Kidney (tissue), 22 donors: ENCODE measurements at regions of chr1 and their contacts with region 1.

Region 1: DNA sequence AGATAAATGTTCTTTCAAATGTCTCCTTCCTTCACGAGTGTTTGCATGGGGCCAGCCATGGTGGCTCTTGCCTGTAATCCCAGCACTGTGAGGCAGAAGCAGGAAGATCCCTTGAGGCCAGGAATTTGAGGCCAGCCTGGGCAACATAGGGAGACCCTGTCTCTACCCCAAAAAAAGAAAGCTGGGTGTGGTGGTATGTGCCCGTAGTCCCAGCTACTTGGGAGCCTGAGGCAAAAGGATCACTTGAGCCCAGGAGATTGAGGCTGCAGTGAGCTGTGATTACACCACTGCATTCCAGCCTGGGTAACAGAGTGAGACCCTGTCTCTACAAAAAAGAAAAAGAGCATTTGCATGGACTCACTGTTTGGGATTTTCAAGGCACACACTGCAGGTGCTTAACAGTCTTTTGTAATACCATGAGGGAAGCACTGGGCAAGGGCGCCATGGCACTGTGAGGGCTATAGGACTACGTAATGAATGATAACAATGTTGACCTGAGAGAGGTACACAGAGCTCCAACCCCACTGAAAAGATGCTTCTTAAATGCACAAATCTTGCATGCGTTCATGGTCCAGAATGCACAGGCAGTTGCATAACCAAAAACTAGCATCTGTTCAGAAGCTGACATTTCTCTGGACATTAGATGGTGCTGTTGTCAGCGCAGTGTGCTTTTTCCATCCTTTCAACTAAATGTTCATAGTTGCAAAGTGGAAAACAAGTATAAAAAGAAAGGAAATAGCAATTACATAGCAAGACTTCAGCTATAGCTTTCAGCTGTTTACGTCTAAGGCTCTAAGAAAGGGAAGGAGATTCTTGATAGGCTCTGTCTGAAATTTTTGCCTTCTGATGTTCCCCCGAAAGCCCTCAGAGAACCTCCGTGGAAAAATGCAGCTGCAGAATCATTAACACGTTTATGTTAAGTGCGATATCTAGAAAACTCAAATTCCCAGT is 7.8 kb upstream of the TARBP1 start:
- DNase-seq: peak in 3 of 5 donors; percentile 37 to 88 (median 69)
- H3K4me3 ChIP-seq: peak overlapping the region in 1 of 3 donors; percentile 26
- H3K27ac ChIP-seq: no peak overlapping the region
- H3K4me1 ChIP-seq: peaks cover 0 to 2% (median 0%) of the 10 kb centered on the region in 3 donors
- H3K27me3 ChIP-seq: no peaks in the 10 kb centered on the region
- CTCF ChIP-seq: peak; percentile 73

Region 2: GRCh38 chr1:234231061-234231892 is 255.5 kb before region 1 on chr1:
- intact Hi-C with region 1: no loop called
- DNase-seq: no peak
- H3K4me3 ChIP-seq: no peak overlapping the region
- H3K27ac ChIP-seq: no peak overlapping the region
- H3K4me1 ChIP-seq: no peaks in the 10 kb centered on the region
- H3K27me3 ChIP-seq: no peaks in the 10 kb centered on the region
- CTCF ChIP-seq: no peak

Region 3: DNA sequence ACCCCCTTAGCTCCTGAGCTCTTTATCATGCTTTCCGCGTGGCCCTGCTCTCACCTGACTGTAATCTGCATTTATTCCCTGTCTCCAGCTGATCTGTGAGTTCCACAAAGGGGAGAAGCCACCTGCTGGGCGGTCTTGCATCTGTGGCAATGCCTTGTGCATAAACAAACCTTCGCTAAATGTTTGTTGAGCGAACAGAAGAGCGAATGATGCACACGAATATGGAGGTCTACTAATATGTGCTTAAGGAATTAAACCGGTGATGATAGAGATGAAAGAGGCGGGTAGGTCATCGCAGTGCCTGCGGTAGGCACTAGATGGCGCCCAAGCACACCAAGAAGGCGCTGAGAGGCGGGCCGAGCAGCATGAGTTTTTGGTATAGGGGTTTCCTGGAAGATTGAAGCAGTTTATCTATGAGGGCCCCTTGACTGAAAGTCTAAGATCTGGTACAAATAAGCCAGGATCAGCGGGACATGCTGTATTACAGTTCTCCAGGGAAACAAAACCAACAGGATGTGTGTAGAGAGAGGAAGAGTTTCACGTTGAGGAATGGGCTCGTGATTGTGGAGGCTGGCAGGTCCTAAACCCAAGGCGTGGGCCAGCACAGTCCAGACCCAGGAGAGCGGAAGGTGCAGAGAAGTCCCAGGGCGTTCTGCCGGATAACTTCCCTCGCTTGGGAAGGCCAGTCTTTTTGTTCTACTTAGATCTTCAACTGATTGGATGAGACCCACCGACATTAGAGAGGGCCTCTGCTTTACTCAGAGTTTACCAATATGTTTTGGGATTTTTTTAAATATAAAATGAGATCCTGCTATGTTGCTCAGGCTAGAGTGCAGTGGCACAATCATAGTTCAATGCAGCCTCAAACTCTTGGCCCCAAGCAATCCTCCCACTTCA is 607.2 kb after region 1 on chr1:
- intact Hi-C with region 1: loop called (anchors 5 kb)
- DNase-seq: peak; percentile 80 to 91 (median 87)
- H3K4me3 ChIP-seq: peak overlapping the region; percentile 8 to 44 (median 32)
- H3K27ac ChIP-seq: no peak overlapping the region
- H3K4me1 ChIP-seq: peaks cover 0 to 11% (median 7%) of the 10 kb centered on the region in 3 donors
- H3K27me3 ChIP-seq: no peaks in the 10 kb centered on the region
- CTCF ChIP-seq: peak; percentile 89